Sigmoid colon (tissue), 7 donors: ENCODE measurements at regions of chr5 and their contacts with region 1.

Region 1: DNA sequence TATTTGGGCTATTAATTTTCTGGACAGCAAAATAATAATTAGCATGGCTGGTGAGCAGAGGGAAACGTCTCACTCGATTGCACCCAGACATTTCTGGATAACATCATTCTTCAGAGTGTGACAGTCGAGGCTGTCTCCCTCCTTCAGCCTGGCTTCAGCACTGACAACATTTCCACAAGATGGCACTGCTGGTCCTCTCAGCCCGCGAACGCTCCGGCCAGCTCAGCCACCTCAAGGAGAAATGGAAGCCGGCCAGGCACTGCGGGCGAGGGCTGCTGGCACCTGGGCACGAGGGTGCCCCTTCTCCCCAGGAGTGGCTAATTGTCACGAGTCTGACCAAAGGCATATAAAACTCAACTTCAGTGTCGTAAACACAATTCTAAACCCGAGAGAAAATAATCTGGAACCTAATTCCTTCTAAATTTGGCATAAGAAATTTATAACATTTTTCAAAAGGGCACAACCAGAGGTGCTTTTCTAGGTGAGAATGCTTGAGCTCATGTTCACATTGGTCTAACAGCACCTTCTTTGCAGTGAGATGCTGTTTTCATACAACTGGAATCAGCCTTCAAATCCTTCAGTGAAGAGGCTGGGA is 65.9 kb downstream of the DAP start:
- DNase-seq: peak; percentile 86
- H3K4me3 ChIP-seq: no peak overlapping the region
- H3K27ac ChIP-seq: no peak overlapping the region
- H3K4me1 ChIP-seq: peaks cover 0 to 20% (median 14%) of the 10 kb centered on the region in 4 donors
- H3K27me3 ChIP-seq: no peaks in the 10 kb centered on the region
- CTCF ChIP-seq: peak; percentile 47 to 76 (median 66)
- EP300 ChIP-seq: no peak
- POLR2A ChIP-seq: no peak

Region 2: GRCh38 chr5:10746711-10747110 is 51.6 kb after region 1 on chr5:
- intact Hi-C with region 1: no loop called
- DNase-seq: no peak
- H3K4me3 ChIP-seq: no peak overlapping the region
- H3K27ac ChIP-seq: no peak overlapping the region
- H3K4me1 ChIP-seq: no peaks in the 10 kb centered on the region
- H3K27me3 ChIP-seq: no peaks in the 10 kb centered on the region
- CTCF ChIP-seq: no peak
- EP300 ChIP-seq: no peak
- POLR2A ChIP-seq: no peak

Region 3: GRCh38 chr5:10885026-10885425 is 189.9 kb after region 1 on chr5:
- intact Hi-C with region 1: no loop called
- DNase-seq: no peak
- H3K4me3 ChIP-seq: no peak overlapping the region
- H3K27ac ChIP-seq: no peak overlapping the region
- H3K4me1 ChIP-seq: no peaks in the 10 kb centered on the region
- H3K27me3 ChIP-seq: no peaks in the 10 kb centered on the region
- CTCF ChIP-seq: no peak
- EP300 ChIP-seq: no peak
- POLR2A ChIP-seq: no peak

Region 4: GRCh38 chr5:12023614-12024241 is 1328.6 kb after region 1 on chr5:
- intact Hi-C with region 1: loop called (anchors 10 kb)
- DNase-seq: no peak
- H3K4me3 ChIP-seq: no peak overlapping the region
- H3K27ac ChIP-seq: no peak overlapping the region
- H3K4me1 ChIP-seq: no peaks in the 10 kb centered on the region
- H3K27me3 ChIP-seq: no peaks in the 10 kb centered on the region
- CTCF ChIP-seq: peak in 1 of 4 experiments; percentile 34
- EP300 ChIP-seq: no peak
- POLR2A ChIP-seq: no peak